ENCODE measurements at regions of chr9 and their contacts with region 1.

Region 1: GRCh38 chr9:109422641-109423040 is 75.5 kb downstream of the PTPN3 start:
- DNase-seq: no peak
- ATAC-seq: no peak

Region 2: GRCh38 chr9:109469646-109470358 is 47.2 kb after region 1 on chr9:
- intact Hi-C with region 1: loop called (anchors 5 kb)
- DNase-seq: no peak
- ATAC-seq: peak; percentile 73